ENCODE measurements at regions of chr9 and their contacts with region 1.

Region 1: GRCh38 chr9:37485389-37486219 is at the start of gene POLR1E:
- DNase-seq: peak; percentile 94 to 97
- ATAC-seq: peak; percentile 98 to 100 (median 99)
- H3K4me3 ChIP-seq: peak within 1 kb of the TSS; percentile 85
- H3K27ac ChIP-seq: peak within 1 kb of the TSS; percentile 92
- H3K4me1 ChIP-seq: peaks cover 11% of the 10 kb centered on the region
- H3K27me3 ChIP-seq: no peaks in the 10 kb centered on the region
- CTCF ChIP-seq: no peak
- total RNA-seq, gene POLR1E: 17.6 to 22.5 (median 21.8) TPM

Region 2: GRCh38 chr9:37520641-37521040 is 35.0 kb after region 1 on chr9:
- intact Hi-C with region 1: no loop called
- DNase-seq: no peak
- ATAC-seq: no peak
- H3K4me3 ChIP-seq: no peak overlapping the region
- H3K27ac ChIP-seq: no peak overlapping the region
- H3K4me1 ChIP-seq: no peaks in the 10 kb centered on the region
- H3K27me3 ChIP-seq: no peaks in the 10 kb centered on the region
- CTCF ChIP-seq: no peak

Region 3: GRCh38 chr9:37534901-37535300 is 49.3 kb after region 1 on chr9:
- intact Hi-C with region 1: loop called in 1 of 2 experiments (anchors 5 kb)
- DNase-seq: no peak
- ATAC-seq: no peak
- H3K4me3 ChIP-seq: no peak overlapping the region
- H3K27ac ChIP-seq: no peak overlapping the region
- H3K4me1 ChIP-seq: no peaks in the 10 kb centered on the region
- H3K27me3 ChIP-seq: no peaks in the 10 kb centered on the region
- CTCF ChIP-seq: no peak

Region 4: GRCh38 chr9:37575921-37576721 is 90.5 kb after region 1 on chr9 and contains the start of gene FBXO10:
- intact Hi-C with region 1: loop called in 1 of 2 experiments (anchors 10 kb)
- DNase-seq: peak; percentile 85 to 87
- ATAC-seq: peak; percentile 89
- H3K4me3 ChIP-seq: peak within 1 kb of the TSS; percentile 90
- H3K27ac ChIP-seq: peak within 1 kb of the TSS; percentile 98
- H3K4me1 ChIP-seq: peaks cover 39% of the 10 kb centered on the region
- H3K27me3 ChIP-seq: no peaks in the 10 kb centered on the region
- CTCF ChIP-seq: no peak
- total RNA-seq, gene FBXO10: 31.3 to 90.4 (median 43.0) TPM

Measured in psoas muscle (tissue), 8 donors.